Activated naive CD4-positive, alpha-beta T cell treated with anti-CD3 and anti-CD28 coated beads, Interleukin-2, amount 10 ng/mL, durations not matched to agents 7 days and 5 days (primary cell): ENCODE measurements at regions of chr14 and their contacts with region 1.

Region 1: DNA sequence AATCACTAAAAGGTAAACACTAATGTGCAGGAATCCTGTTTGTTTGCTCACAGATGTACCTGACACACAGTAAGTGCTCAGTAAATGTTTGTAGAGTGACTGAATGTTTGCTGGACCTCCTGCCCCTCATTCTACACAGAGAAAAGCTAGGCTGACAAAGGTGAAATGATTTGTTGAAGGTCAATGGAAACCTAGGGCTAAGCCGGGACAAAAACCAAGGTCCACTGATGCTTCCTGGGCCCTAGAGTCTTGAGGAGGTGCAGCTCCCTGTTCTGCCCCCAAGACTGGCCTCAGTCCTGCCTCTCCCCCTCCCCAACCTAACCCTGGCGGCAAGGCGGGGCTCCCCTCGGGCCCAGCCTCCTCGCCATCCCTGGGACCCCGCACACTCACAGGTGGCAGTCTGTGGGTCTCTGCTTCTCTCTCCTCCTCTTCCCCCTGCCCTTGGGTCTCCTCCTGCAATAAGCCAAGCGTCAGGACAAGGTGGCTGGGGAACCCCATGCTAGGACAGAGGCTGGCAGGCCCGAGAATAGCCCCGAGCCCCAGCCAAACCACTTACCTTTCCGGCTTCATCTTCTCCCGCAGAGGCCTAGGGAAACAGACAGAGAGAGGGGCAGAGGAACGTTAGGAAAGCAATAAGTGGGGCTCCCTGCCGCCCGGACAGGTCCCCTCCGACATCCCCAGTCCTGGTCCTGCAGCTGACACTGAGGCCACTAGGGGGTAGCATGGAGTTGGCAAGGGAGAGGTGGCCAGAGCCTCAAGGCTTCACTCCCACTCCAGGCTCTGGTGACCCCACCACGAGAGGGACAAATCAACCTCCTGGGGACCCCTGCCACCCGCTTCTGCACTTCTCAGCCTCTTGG is 9.3 kb downstream of the PGF start:
- DNase-seq: peak; percentile 85
- H3K4me3 Mint-ChIP-seq: no peak overlapping the region
- H3K27ac Mint-ChIP-seq: peak overlapping the region; percentile 42
- H3K4me1 Mint-ChIP-seq: peaks cover 32% of the 10 kb centered on the region
- H3K27me3 Mint-ChIP-seq: peaks cover 33% of the 10 kb centered on the region

Region 2: DNA sequence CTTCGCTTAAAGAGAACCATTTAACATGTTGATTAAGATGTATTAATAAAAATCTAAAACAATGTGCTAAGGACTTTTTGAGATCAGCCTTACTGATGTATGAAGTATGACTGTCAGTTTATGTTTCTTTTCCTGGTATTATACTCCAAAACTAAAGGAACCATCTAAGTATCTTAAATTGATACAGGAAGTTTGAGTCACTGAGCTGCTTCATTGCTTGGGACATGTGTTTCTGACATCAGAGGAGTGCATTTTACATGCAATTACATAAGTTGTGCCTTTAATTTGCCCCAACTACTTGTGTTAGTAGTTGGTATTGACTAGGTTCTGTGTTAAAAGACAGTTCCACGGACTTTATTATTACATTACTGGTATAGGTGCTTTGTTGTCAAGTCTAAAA is 121.1 kb before region 1 on chr14:
- CTCF ChIA-PET with region 1: no interaction called
- DNase-seq: no peak
- H3K4me3 Mint-ChIP-seq: no peak overlapping the region
- H3K27ac Mint-ChIP-seq: no peak overlapping the region
- H3K4me1 Mint-ChIP-seq: peaks cover 2% of the 10 kb centered on the region
- H3K27me3 Mint-ChIP-seq: no peaks in the 10 kb centered on the region

Region 3: GRCh38 chr14:74963705-74964271 is 17.7 kb after region 1 on chr14:
- CTCF ChIA-PET with region 1: interaction called, 16 read pairs
- DNase-seq: no peak
- H3K4me3 Mint-ChIP-seq: no peak overlapping the region
- H3K27ac Mint-ChIP-seq: no peak overlapping the region
- H3K4me1 Mint-ChIP-seq: peaks cover 3% of the 10 kb centered on the region
- H3K27me3 Mint-ChIP-seq: peaks cover 54% of the 10 kb centered on the region

Region 4: DNA sequence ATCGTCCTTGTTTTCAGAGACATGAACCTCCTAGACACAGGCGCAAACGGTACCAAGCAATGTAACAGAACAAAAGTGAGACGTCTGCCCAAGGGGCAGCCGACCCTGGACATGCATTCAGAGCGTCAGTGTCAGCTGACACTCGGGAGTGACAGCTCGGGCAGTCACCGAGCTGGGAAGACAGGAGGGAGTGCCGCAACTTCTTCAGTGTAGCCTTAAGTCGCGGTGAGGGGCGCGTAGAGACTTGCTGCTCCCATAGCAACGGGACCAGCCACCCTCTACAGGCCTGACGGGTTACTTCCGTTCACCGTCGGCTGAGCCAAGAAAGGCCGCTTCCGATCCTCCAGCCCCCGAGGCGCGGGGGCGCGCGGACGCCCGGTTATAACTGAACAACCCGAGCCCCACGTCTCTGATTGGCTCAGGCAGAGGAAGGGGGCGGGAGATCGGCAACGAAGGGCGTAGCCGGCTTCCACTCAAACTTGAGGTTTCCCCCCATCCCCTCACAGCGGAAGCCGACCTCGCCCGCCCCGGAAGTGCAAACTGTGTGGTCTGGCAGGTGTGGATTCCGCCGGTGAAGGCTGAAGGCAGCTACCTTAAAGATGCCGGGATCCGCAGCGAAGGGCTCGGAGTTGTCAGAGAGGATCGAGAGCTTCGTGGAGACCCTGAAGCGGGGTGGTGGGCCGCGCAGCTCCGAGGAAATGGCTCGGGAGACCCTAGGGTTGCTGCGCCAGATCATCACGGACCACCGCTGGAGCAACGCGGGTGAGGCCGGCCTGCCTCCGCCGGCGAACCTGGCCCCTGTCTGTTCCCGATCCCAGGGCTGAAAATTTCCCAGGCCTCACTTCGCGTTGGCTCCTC is 56.6 kb after region 1 on chr14 and contains the start of gene EIF2B2:
- CTCF ChIA-PET with region 1: interaction called, 17 read pairs
- DNase-seq: peak; percentile 99
- H3K4me3 Mint-ChIP-seq: peak within 1 kb of the TSS; percentile 93
- H3K27ac Mint-ChIP-seq: peak within 1 kb of the TSS; percentile 83
- H3K4me1 Mint-ChIP-seq: peaks cover 49% of the 10 kb centered on the region
- H3K27me3 Mint-ChIP-seq: peaks cover 14% of the 10 kb centered on the region

Region 5: DNA sequence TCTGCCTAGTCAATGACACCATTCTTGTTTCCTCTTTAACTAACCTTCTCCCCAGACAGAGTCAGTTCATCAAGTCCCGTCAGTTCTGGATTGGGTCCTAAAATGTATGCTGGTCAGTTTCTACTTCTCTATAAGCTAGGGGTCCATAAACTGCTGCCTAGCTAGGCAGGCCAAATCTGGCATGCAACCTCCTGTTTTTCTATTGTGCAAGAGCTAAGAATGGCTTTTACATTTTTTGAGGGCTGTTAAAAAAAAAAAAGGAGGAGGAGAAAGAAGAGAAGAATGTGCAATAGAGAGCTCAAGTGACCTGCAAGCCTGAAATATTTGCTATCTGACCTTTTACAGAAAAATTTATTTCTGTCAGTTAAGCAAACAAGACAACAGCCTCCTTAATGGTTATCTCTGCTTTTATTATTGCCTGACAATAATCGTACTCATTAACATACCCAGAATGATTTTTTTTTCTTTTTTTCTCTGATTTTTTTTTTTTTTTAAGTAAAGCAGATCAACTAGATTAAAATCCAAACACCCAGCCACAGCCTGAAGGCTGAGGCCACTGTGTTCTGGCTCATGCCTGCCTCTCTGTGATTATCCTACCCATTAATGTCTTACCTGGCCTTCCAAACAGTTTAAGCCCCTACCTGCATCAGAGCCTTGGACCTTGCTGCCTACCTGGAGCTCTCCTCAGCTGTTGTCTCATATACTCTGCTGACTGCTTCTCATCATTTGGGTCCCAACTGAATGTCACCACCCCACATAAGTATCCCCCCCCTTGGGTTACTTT is 237.0 kb after region 1 on chr14:
- CTCF ChIA-PET with region 1: no interaction called
- DNase-seq: no peak
- H3K4me3 Mint-ChIP-seq: no peak overlapping the region
- H3K27ac Mint-ChIP-seq: no peak overlapping the region
- H3K4me1 Mint-ChIP-seq: peaks cover under 1% of the 10 kb centered on the region
- H3K27me3 Mint-ChIP-seq: peaks cover 42% of the 10 kb centered on the region